Heart right ventricle (tissue), 16 donors: ENCODE measurements at regions of chr5 and their contacts with region 1.

Region 1: GRCh38 chr5:34898258-34898895 is 16.9 kb downstream of the RAD1 start:
- DNase-seq: peak; percentile 28 to 54
- ATAC-seq: peak; percentile 71 to 84 (median 76)
- H3K4me3 ChIP-seq: no peak overlapping the region
- H3K27ac ChIP-seq: no peak overlapping the region
- H3K4me1 ChIP-seq: no peaks in the 10 kb centered on the region
- H3K27me3 ChIP-seq: no peaks in the 10 kb centered on the region
- CTCF ChIP-seq: peak; percentile 81 to 95 (median 88)

Region 2: DNA sequence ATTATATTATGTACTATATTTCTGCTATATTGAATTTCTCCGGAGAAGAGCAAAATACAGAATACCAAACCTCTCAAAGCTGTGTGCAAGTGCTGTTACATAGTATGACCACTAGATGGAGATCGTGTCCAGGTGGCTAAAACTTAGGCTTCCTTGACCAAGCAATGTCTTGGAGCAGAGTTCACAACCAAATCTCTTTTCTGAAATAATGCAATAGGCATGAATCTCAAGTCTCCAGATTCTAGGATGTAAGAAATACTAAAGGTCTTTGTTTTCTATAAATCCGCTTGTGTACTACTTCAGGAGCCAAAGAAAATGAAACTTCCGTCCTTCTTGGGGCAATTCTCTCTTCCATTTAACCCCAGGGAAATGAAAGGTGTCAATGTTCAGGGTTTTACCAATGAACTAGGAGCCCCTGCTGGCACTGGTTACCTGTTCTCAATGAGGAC is 423.8 kb before region 1 on chr5:
- intact Hi-C with region 1: loop called in 4 of 10 experiments (anchors 1 to 5 kb)
- DNase-seq: no peak
- ATAC-seq: peak in 7 of 8 donors; percentile 47 to 76 (median 63)
- H3K4me3 ChIP-seq: no peak overlapping the region
- H3K27ac ChIP-seq: no peak overlapping the region
- H3K4me1 ChIP-seq: no peaks in the 10 kb centered on the region
- H3K27me3 ChIP-seq: peaks cover 0 to 28% (median 4%) of the 10 kb centered on the region in 7 donors
- CTCF ChIP-seq: peak; percentile 84 to 96 (median 94)

Region 3: DNA sequence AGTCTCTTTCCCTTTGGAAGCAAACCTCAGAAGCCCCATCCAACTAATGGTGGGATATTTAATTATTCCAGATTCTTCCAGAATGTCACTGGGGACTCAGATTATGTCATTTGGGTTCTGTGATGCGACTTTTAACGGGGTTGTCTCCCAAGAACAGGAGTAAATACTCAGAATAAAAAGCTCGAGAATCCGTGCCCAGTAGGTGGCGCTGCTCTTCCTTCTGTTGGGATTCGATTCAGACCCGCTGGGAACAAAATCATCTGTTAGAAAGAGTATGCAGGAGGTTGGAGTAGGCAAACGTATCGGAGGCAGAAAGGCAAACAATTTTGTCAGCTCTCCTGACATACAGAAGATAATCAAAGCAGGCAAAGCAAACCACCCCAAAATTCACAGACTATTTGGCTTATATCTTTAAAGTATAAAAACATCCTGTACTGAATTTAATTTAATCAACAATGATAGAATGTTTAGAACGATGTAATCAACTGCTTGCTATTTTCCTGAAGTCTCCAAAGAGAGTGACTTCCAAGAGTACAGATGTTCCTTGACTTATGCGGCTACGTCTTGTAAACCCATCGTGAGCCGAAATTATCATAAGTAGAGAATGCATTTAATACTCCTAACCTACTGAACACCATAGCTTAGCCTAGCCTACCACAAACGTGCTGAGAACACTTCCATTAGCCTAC is 412.1 kb before region 1 on chr5:
- intact Hi-C with region 1: loop called in 8 of 10 experiments (anchors 1 to 5 kb)
- DNase-seq: peak; percentile 78
- ATAC-seq: peak; percentile 65 to 91 (median 78)
- H3K4me3 ChIP-seq: no peak overlapping the region
- H3K27ac ChIP-seq: no peak overlapping the region
- H3K4me1 ChIP-seq: peaks cover 0 to 19% (median 7%) of the 10 kb centered on the region in 9 donors
- H3K27me3 ChIP-seq: no peaks in the 10 kb centered on the region
- CTCF ChIP-seq: peak; percentile 62 to 86 (median 83)

Region 4: GRCh38 chr5:34511915-34512314 is 386.5 kb before region 1 on chr5:
- intact Hi-C with region 1: no loop called
- DNase-seq: peak in 1 of 2 donors; percentile 41
- ATAC-seq: peak; percentile 79 to 91 (median 87)
- H3K4me3 ChIP-seq: no peak overlapping the region
- H3K27ac ChIP-seq: peak overlapping the region in 1 of 10 donors; percentile 49
- H3K4me1 ChIP-seq: peaks cover 0 to 10% (median 0%) of the 10 kb centered on the region in 9 donors
- H3K27me3 ChIP-seq: no peaks in the 10 kb centered on the region
- CTCF ChIP-seq: no peak

Region 5: DNA sequence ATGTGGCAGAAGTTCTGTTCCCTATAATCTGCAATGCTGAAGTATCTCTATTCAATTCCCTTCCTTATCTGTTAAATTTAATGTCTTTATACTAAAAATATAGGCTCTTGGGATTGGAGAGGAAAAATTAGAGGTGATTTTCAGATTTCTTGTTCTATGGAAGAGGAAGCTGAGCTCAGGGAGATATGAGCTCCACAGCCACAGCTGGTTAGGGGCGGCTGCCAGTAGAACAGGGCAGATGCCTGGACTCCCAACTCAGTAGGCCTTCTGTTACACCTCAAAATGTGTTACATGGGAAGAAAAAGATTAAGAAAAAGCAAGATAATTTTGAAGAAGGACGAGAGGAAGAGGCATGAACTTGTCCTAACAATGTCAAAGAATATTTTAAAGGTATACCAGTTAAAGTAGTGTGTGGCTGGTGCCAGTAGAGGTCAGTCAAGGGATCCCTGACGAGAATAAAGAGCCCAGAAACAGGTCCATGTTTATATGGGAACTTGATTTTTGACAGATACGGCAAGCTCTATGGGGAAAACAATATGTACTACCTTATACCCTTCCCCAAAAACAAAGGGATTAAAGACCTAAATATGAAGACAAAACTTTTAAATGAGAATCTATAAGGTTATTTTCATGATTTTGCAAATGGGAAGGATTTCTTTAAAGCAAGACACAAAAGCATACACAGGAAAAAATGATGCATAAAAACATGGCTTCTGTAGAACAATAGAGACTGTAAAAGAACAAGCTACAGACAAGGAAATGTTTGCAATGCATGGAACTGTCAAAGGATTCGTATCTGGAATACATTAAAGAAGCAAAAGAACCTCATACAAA is 59.7 kb after region 1 on chr5:
- intact Hi-C with region 1: no loop called
- DNase-seq: no peak
- ATAC-seq: peak in 2 of 8 donors; percentile 37 to 49
- H3K4me3 ChIP-seq: no peak overlapping the region
- H3K27ac ChIP-seq: no peak overlapping the region
- H3K4me1 ChIP-seq: no peaks in the 10 kb centered on the region
- H3K27me3 ChIP-seq: no peaks in the 10 kb centered on the region
- CTCF ChIP-seq: peak in 8 of 9 donors; percentile 14 to 65 (median 50)